Left ventricle myocardium superior (tissue), 1 donor: ENCODE measurements at regions of chr15 and their contacts with region 1.

Region 1: GRCh38 chr15:85494048-85494793 is 113.8 kb downstream of the AKAP13 start:
- DNase-seq: no peak
- ATAC-seq: peak; percentile 59

Region 2: DNA sequence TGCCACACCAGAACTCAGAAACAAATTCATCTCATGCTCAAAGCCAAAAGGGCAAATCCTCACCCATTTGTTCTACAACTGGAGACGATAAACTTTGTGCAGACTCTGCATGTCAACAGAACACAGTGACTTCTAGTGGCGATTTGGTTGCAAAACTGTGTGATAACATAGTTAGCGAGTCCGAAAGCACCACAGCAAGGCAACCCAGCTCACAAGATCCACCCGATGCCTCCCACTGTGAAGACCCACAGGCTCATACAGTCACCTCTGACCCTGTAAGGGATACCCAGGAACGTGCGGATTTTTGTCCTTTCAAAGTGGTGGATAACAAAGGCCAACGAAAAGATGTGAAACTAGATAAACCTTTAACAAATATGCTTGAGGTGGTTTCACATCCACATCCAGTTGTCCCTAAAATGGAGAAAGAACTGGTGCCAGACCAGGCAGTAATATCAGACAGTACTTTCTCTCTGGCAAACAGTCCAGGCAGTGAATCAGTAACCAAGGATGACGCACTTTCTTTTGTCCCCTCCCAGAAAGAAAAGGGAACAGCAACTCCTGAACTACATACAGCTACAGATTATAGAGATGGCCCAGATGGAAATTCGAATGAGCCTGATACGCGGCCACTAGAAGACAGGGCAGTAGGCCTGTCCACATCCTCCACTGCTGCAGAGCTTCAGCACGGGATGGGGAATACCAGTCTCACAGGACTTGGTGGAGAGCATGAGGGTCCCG is 85.9 kb after region 1 on chr15:
- intact Hi-C with region 1: loop called (anchors 10 kb)
- DNase-seq: peak; percentile 47
- ATAC-seq: peak; percentile 61

Region 3: DNA sequence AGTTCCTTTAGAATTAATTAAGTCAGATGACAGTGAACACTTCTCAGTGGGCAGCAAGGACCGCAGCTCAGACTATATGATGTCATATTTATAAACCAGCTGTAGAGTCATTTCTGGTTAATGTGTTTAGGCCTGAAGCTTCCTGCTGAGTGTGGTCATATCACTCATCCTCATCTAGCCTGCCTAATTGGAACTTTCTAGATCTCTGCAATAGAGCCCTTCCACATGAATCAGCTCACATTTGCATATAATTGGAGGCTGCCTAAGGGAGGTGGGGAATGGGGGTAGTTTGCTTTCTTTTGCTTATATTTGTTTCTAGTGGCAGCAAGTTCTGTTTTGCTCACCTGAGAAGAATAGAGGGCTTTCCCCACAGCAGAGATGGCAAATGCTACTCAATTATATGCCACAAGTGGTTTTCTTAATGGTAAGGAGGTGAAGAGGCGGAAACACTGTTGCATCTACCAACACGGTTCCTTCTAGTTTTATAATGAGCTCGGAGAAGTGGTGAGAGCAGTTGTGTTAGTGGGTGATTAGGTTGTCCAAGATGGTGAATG is 152.4 kb after region 1 on chr15:
- intact Hi-C with region 1: no loop called
- DNase-seq: no peak
- ATAC-seq: no peak

Region 4: GRCh38 chr15:85730001-85730820 is 236.0 kb after region 1 on chr15:
- intact Hi-C with region 1: loop called (anchors 10 kb)
- DNase-seq: no peak
- ATAC-seq: peak; percentile 58